ENCODE measurements at regions of chr11 and their contacts with region 1.

Region 1: GRCh38 chr11:77187776-77188632 is 60.0 kb downstream of the MYO7A start:
- DNase-seq: peak; percentile 78 to 84 (median 84)
- ATAC-seq: peak; percentile 85 to 97 (median 94)
- H3K4me3 ChIP-seq: no peak overlapping the region
- H3K27ac ChIP-seq: no peak overlapping the region
- H3K4me1 ChIP-seq: peaks cover 0 to 4% (median 0%) of the 10 kb centered on the region in 4 donors
- H3K27me3 ChIP-seq: no peaks in the 10 kb centered on the region
- CTCF ChIP-seq: peak; percentile 84 to 93 (median 91)
- POLR2A ChIP-seq: no peak

Region 2: GRCh38 chr11:76885390-76886097 is 302.5 kb before region 1 on chr11:
- intact Hi-C with region 1: no loop called
- DNase-seq: no peak
- ATAC-seq: peak; percentile 39 to 53 (median 50)
- H3K4me3 ChIP-seq: no peak overlapping the region
- H3K27ac ChIP-seq: no peak overlapping the region
- H3K4me1 ChIP-seq: peaks cover 0 to 3% (median 0%) of the 10 kb centered on the region in 4 donors
- H3K27me3 ChIP-seq: no peaks in the 10 kb centered on the region
- CTCF ChIP-seq: no peak
- POLR2A ChIP-seq: no peak

Region 3: GRCh38 chr11:77003954-77004353 is 184.1 kb before region 1 on chr11:
- intact Hi-C with region 1: no loop called
- DNase-seq: no peak
- ATAC-seq: no peak
- H3K4me3 ChIP-seq: no peak overlapping the region
- H3K27ac ChIP-seq: no peak overlapping the region
- H3K4me1 ChIP-seq: no peaks in the 10 kb centered on the region
- H3K27me3 ChIP-seq: no peaks in the 10 kb centered on the region
- CTCF ChIP-seq: no peak
- POLR2A ChIP-seq: no peak

Region 4: GRCh38 chr11:77039491-77040400 is 148.3 kb before region 1 on chr11:
- intact Hi-C with region 1: loop called in 1 of 2 experiments (anchors 5 kb)
- DNase-seq: no peak
- ATAC-seq: peak; percentile 50 to 58 (median 51)
- H3K4me3 ChIP-seq: peak overlapping the region; percentile 14 to 24 (median 22)
- H3K27ac ChIP-seq: no peak overlapping the region
- H3K4me1 ChIP-seq: no peaks in the 10 kb centered on the region
- H3K27me3 ChIP-seq: peaks cover 0 to 6% of the 10 kb centered on the region in 2 donors
- CTCF ChIP-seq: peak in 3 of 4 donors; percentile 27 to 37 (median 27)
- POLR2A ChIP-seq: no peak

Region 5: DNA sequence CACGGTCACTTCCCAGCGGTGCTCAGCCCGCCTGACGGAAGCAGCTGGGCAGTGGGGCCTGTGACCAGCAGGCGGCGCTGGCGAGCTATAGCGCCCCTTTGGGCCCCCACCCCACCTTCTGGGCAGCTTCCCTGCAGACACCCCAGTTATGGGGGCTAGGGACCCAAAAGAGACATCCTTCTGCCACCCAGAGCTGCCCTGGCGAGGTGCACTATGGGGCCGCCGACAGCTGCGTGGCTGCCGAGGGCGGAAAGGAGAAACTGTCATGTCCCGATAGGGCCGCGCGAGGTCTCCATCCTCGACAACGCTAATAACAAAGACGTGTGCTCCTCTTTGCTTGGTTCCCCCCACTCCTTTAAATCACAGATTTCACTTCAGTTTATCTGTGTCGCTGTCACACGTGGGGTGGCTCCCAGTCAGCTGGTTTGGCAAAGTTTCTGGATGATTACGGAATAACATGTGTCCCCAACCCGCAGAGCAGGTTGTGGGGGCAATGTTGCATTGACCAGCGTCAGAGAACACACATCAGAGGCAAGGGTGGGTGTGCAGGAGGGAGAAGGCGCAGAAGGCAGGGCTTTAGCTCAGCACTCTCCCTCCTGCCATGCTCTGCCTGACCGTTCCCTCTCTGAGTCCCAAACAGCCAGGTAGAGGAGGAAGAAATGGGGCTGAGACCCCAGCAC is 60.6 kb before region 1 on chr11:
- intact Hi-C with region 1: loop called (anchors 5 kb)
- DNase-seq: peak; percentile 62 to 75 (median 74)
- ATAC-seq: peak; percentile 50 to 60 (median 56)
- H3K4me3 ChIP-seq: peak overlapping the region; percentile 40 to 61 (median 60)
- H3K27ac ChIP-seq: peak overlapping the region; percentile 63 to 93 (median 88)
- H3K4me1 ChIP-seq: peaks cover 0 to 47% (median 25%) of the 10 kb centered on the region in 4 donors
- H3K27me3 ChIP-seq: no peaks in the 10 kb centered on the region
- CTCF ChIP-seq: peak; percentile 99 to 100 (median 100)
- POLR2A ChIP-seq: no peak

Region 6: GRCh38 chr11:77547863-77548551 is 360.0 kb after region 1 on chr11:
- intact Hi-C with region 1: loop called (anchors 10 kb)
- DNase-seq: peak in 1 of 3 donors; percentile 47
- ATAC-seq: peak; percentile 75 to 92 (median 84)
- H3K4me3 ChIP-seq: no peak overlapping the region
- H3K27ac ChIP-seq: no peak overlapping the region
- H3K4me1 ChIP-seq: no peaks in the 10 kb centered on the region
- H3K27me3 ChIP-seq: no peaks in the 10 kb centered on the region
- CTCF ChIP-seq: peak; percentile 65 to 73 (median 72)
- POLR2A ChIP-seq: no peak

Region 7: DNA sequence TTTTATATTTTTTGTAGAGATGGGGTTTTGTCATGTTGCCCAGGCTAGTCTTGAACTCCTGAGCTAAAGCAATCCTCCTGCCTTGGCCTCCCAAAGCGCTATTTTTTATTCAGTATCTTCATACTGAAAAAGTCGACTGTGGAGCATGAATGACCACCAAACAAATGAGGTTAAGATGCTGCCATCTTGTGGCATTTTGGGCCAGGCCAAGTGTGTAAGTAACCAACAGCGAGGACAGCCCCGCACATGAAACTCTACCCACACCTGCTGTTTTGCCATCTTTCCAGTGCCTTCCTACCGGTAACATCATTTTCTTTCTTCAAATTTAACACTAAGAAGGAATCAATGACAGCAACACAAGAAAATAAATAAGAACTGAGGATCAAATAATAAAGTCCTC is 369.6 kb after region 1 on chr11:
- intact Hi-C with region 1: loop called in 1 of 2 experiments (anchors 10 kb)
- DNase-seq: no peak
- ATAC-seq: no peak
- H3K4me3 ChIP-seq: no peak overlapping the region
- H3K27ac ChIP-seq: no peak overlapping the region
- H3K4me1 ChIP-seq: no peaks in the 10 kb centered on the region
- H3K27me3 ChIP-seq: no peaks in the 10 kb centered on the region
- CTCF ChIP-seq: peak in 3 of 4 donors; percentile 16 to 31 (median 29)
- POLR2A ChIP-seq: no peak

Measured in right lobe of liver (tissue), 6 donors.